ENCODE measurements at regions of chr1 and their contacts with region 1.

Region 1: DNA sequence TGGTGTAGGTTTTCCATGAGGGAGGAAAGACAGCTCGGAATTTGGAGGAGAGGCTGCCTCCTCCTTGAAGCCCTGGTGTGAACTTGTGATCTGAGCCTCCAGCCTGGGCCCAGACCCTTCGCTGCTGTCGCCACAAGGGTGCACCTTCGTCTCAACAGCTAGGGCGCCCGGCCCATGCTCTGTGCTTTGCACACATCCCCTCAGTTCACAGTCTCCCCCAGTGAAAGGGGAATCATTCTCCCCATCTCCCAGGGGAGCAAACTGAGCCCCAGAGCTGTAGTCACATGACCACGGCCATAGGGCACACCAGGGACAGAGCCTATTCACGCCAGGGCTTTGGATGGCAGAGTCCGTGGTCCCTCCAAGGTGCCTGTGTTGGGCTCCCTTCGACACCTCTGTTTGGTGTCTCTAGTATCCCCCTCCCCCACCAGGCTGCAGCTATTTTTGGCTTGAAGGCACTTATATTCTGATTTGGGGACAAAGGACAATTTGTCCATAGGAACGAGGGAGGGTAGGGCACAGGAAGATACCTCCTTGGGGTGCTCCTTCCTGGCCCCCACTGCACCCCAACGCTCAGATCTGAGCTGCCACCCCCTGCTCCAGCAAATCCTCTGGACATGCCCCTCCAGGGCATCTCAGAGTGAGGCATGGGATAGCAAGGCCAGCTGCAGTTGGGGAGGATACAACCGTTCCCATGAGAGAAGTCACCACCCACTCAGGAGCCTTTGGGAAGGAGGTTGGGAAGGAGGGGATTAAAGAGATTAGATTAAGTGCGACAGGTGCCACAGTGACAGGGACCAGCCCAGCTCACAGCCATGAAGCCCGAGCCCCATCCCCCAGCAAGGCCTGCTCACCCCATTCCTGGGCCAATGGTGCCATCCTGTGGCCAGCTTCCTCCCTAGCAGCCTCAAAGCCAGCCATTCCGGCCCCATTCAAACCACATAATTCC is 15.7 kb downstream of the MATN1 start:
- DNase-seq: no peak
- H3K4me3 ChIP-seq: no peak overlapping the region
- H3K27ac ChIP-seq: no peak overlapping the region
- H3K4me1 ChIP-seq: no peaks in the 10 kb centered on the region
- H3K27me3 ChIP-seq: no peaks in the 10 kb centered on the region
- CTCF ChIP-seq: peak; percentile 66 to 83 (median 82)

Region 2: DNA sequence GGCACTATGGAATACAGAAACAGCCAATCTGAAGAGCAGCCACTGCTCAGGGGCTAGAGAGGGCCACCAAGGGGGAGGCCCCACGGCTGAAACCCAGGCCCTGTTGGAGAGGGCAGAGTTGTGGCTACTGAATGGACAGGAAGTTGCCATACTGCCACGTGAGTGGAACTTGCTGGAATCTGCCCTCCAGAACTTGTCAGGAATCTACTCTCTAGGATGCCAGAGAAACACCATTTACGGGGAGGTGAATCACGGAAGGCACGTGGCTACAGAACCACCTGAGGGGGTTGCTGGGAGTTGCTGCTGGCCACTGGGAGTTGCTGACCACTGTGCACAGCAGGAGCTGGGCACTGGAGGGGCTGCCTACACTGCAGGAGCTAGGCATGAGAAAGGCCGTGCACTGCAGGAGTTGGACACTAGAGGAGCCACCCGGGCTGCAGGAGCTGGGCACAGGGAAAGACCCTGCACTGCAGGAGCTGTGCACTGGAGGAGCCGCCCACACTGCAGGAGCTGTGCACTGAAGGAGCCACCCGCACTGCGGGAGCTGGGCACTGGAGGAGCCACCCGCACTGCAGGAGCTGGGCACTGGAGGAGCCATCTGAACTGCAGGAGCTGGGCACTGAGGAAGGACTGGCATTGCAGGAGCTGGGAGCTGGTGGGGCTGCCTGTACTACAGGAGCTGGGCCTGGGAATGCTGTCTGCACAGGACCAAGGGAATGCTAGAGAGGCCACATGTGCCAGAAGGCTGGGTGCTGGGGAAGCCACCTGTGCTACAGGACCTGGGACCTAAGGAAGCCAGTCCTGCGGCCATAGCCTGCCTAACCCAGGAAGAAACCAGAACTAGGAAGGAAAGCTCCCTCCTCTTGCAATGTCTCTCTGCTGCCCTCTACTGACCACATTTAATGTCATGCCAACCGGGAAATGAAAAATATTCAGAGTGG is 327.7 kb before region 1 on chr1:
- intact Hi-C with region 1: loop called (anchors 5 kb)
- DNase-seq: peak in 1 of 2 donors; percentile 75
- H3K4me3 ChIP-seq: no peak overlapping the region
- H3K27ac ChIP-seq: no peak overlapping the region
- H3K4me1 ChIP-seq: no peaks in the 10 kb centered on the region
- H3K27me3 ChIP-seq: no peaks in the 10 kb centered on the region
- CTCF ChIP-seq: peak; percentile 53 to 79 (median 73)